ENCODE measurements at regions of chr14 and their contacts with region 1.

Region 1: DNA sequence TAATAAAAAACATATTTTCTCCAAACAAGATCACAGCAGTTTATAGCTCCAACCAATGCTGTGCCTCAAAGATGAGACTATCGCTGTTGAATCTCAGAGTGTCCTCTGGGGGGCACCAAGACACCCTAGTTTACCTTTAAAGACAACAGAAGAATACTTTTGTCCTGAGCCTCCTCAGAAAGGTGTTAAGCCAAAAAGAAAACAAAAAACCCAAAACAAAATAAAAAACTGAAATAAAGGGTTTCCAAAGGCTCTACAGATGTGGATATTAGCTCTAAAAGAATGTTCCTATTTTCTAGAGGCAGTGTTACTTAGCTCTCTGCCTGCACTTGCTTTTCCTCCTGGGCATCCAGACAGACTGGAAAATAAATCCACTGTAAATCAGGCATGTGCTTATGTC is 86.9 kb upstream of the TTC7B start:
- H3K4me3 Mint-ChIP-seq: no peak overlapping the region
- H3K27ac Mint-ChIP-seq: no peak overlapping the region
- H3K4me1 Mint-ChIP-seq: no peaks in the 10 kb centered on the region
- H3K27me3 Mint-ChIP-seq: no peaks in the 10 kb centered on the region

Region 2: GRCh38 chr14:91060351-91061055 is 157.4 kb after region 1 on chr14 and contains the start of gene RPS6KA5:
- intact Hi-C with region 1: loop called (anchors 10 kb)
- H3K4me3 Mint-ChIP-seq: peak within 1 kb of the TSS; percentile 78
- H3K27ac Mint-ChIP-seq: no peak within 1 kb of the TSS
- H3K4me1 Mint-ChIP-seq: peaks cover 19% of the 10 kb centered on the region
- H3K27me3 Mint-ChIP-seq: no peaks in the 10 kb centered on the region

Region 3: GRCh38 chr14:91140672-91141071 is 237.6 kb after region 1 on chr14:
- intact Hi-C with region 1: loop called (anchors 10 kb)
- H3K4me3 Mint-ChIP-seq: no peak overlapping the region
- H3K27ac Mint-ChIP-seq: no peak overlapping the region
- H3K4me1 Mint-ChIP-seq: peaks cover 43% of the 10 kb centered on the region
- H3K27me3 Mint-ChIP-seq: no peaks in the 10 kb centered on the region

Region 4: GRCh38 chr14:91177073-91178034 is 274.3 kb after region 1 on chr14:
- intact Hi-C with region 1: loop called (anchors 1 kb)
- H3K4me3 Mint-ChIP-seq: no peak overlapping the region
- H3K27ac Mint-ChIP-seq: peak overlapping the region; percentile 2
- H3K4me1 Mint-ChIP-seq: no peaks in the 10 kb centered on the region
- H3K27me3 Mint-ChIP-seq: no peaks in the 10 kb centered on the region

Region 5: GRCh38 chr14:91286530-91286937 is 383.4 kb after region 1 on chr14:
- intact Hi-C with region 1: loop called (anchors 5 kb)
- H3K4me3 Mint-ChIP-seq: no peak overlapping the region
- H3K27ac Mint-ChIP-seq: no peak overlapping the region
- H3K4me1 Mint-ChIP-seq: peaks cover 5% of the 10 kb centered on the region
- H3K27me3 Mint-ChIP-seq: no peaks in the 10 kb centered on the region

Measured in dendritic cell treated with granulocyte-macrophage colony-stimulating factor and Interleukin-4, amounts not matched to agents 40 ng/mL and 50 ng/mL, for 4 days (primary cell).